CD8-positive, alpha-beta T cell (primary cell): ENCODE measurements at regions of chr5 and their contacts with region 1.

Region 1: DNA sequence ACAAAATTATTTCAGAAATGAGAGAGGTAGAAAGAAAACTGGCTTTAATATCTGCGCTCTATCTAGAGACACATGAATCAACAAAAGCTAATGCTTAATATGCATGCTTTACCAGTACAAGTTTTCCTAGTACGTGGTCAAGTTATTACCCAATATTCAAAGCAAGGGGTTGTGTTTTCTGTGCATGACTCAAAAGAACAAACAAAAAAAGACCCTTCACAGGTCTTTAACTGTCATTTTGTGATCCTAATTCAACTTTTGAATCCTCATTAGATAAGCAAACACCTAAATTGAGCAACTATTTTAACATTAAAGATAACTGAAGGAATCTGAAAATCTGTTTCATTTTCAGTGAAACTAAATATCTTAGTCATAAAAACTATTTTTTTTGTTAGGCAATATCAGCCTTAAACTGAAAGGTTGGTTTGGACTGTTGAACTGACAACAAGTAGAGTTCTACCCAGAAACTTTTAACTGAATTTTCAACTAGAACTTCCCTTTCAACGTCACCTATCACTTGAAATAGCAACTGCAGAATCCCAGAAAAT is 12.5 kb downstream of the ST8SIA4 start:
- DNase-seq: peak in 1 of 9 experiments; percentile 33
- ATAC-seq: no peak
- H3K4me3 ChIP-seq: no peak overlapping the region
- H3K4me3 Mint-ChIP-seq: peak overlapping the region; percentile 76
- H3K27ac ChIP-seq: peak overlapping the region in 1 of 2 experiments; percentile 74
- H3K27ac Mint-ChIP-seq: peak overlapping the region; percentile 84
- H3K4me1 ChIP-seq: peaks cover 35% of the 10 kb centered on the region
- H3K4me1 Mint-ChIP-seq: peaks cover 69% of the 10 kb centered on the region
- H3K27me3 ChIP-seq: no peaks in the 10 kb centered on the region
- H3K27me3 Mint-ChIP-seq: no peaks in the 10 kb centered on the region
- CTCF ChIP-seq: no peak

Region 2: DNA sequence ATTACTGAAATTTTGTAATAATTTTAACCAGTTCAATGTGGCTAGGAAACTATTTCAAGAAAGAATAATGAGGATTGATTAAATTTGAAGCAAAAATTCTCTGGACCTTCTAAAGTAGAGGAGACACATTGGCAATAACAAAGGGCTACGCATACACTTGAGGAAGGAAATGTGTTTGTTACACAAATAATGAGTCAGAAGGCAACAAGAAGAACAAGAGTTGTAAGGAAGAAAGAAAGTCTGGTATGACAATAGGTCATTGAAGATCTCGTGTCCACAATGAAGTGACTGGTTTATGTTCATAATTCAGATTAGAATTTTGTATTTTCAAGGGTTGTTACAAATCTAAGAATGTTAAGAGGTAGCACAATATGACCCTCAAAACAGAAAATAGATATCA is 13.3 kb before region 1 on chr5:
- CTCF ChIA-PET with region 1: interaction called, 3 read pairs
- POLR2A ChIA-PET with region 1: interaction called, 3 read pairs
- intact Hi-C with region 1: loop called in 1 of 2 experiments (anchors 2 kb)
- DNase-seq: no peak
- ATAC-seq: no peak
- H3K4me3 ChIP-seq: no peak overlapping the region
- H3K4me3 Mint-ChIP-seq: no peak overlapping the region
- H3K27ac ChIP-seq: no peak overlapping the region
- H3K27ac Mint-ChIP-seq: no peak overlapping the region
- H3K4me1 ChIP-seq: no peaks in the 10 kb centered on the region
- H3K4me1 Mint-ChIP-seq: peaks cover 63% of the 10 kb centered on the region
- H3K27me3 ChIP-seq: no peaks in the 10 kb centered on the region
- H3K27me3 Mint-ChIP-seq: no peaks in the 10 kb centered on the region
- CTCF ChIP-seq: no peak

Region 3: GRCh38 chr5:101278011-101278687 is 387.6 kb after region 1 on chr5:
- CTCF ChIA-PET with region 1: no interaction called
- POLR2A ChIA-PET with region 1: no interaction called
- intact Hi-C with region 1: no loop called
- DNase-seq: no peak
- ATAC-seq: no peak
- H3K4me3 ChIP-seq: no peak overlapping the region
- H3K4me3 Mint-ChIP-seq: no peak overlapping the region
- H3K27ac ChIP-seq: no peak overlapping the region
- H3K27ac Mint-ChIP-seq: no peak overlapping the region
- H3K4me1 ChIP-seq: no peaks in the 10 kb centered on the region
- H3K4me1 Mint-ChIP-seq: no peaks in the 10 kb centered on the region
- H3K27me3 ChIP-seq: no peaks in the 10 kb centered on the region
- H3K27me3 Mint-ChIP-seq: no peaks in the 10 kb centered on the region
- CTCF ChIP-seq: no peak